Endothelial cell of umbilical vein (primary cell): ENCODE measurements at regions of chr1 and their contacts with region 1.

Region 1: DNA sequence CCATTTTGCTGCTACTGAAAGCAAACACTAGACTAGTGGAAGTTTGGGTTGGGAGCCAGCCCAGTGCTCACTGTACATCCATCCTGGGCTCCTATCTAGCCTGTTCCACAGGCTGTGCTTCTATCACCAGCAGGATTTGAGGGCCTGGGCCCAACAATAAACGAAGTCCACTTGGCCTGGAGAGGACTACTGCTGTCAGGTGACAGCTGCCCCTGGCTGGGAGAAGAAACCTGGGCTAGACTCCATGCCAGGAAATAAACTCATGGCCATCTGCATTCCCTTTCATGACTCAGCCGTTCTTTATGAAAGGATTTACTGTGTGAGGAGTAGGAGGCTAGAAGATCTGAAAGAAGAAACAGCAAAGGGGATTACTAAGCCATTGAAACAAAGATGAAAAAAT is 35.5 kb downstream of the COLGALT2 start:
- DNase-seq: peak; percentile 79
- H3K4me3 ChIP-seq: no peak overlapping the region
- H3K27ac ChIP-seq: peak overlapping the region; percentile 6
- H3K4me1 ChIP-seq: peaks cover 7% of the 10 kb centered on the region
- H3K27me3 ChIP-seq: no peaks in the 10 kb centered on the region
- CTCF ChIP-seq: no peak
- POLR2A ChIP-seq: no peak

Region 2: GRCh38 chr1:183956559-183957188 is 45.4 kb before region 1 on chr1:
- CTCF ChIA-PET with region 1: no interaction called
- POLR2A ChIA-PET with region 1: no interaction called
- dilution Hi-C with region 1: no loop called
- intact Hi-C with region 1: loop called (anchors 2 kb)
- DNase-seq: peak; percentile 79
- H3K4me3 ChIP-seq: no peak overlapping the region
- H3K27ac ChIP-seq: no peak overlapping the region
- H3K4me1 ChIP-seq: peaks cover 9% of the 10 kb centered on the region
- H3K27me3 ChIP-seq: peaks cover 5% of the 10 kb centered on the region in 2 experiments
- CTCF ChIP-seq: peak in 1 of 2 donors; percentile 13
- POLR2A ChIP-seq: no peak

Region 3: GRCh38 chr1:183968386-183968785 is 33.7 kb before region 1 on chr1:
- CTCF ChIA-PET with region 1: no interaction called
- POLR2A ChIA-PET with region 1: no interaction called
- dilution Hi-C with region 1: no loop called
- intact Hi-C with region 1: no loop called
- DNase-seq: no peak
- H3K4me3 ChIP-seq: no peak overlapping the region
- H3K27ac ChIP-seq: no peak overlapping the region
- H3K4me1 ChIP-seq: no peaks in the 10 kb centered on the region
- H3K27me3 ChIP-seq: peaks cover 2 to 14% of the 10 kb centered on the region in 2 experiments
- CTCF ChIP-seq: no peak
- POLR2A ChIP-seq: no peak